GM18951 (cell line): ENCODE measurements at regions of chr20 and their contacts with region 1.

Region 1: GRCh38 chr20:40970201-40970600 is 58.4 kb upstream of the TOP1 start:
- POLR2A ChIP-seq: no peak

Region 2: GRCh38 chr20:41095110-41095969 is 125.1 kb after region 1 on chr20:
- in situ Hi-C with region 1: loop called (anchors 5 kb)
- POLR2A ChIP-seq: no peak